KBM-7 (cell line): ENCODE measurements at regions of chr3 and their contacts with region 1.

Region 1: GRCh38 chr3:43855674-43856299 is 165.0 kb downstream of the ABHD5 start:
- DNase-seq: peak; percentile 76

Region 2: GRCh38 chr3:43394041-43394554 is 461.7 kb before region 1 on chr3:
- in situ Hi-C with region 1: no loop called
- DNase-seq: peak; percentile 56

Region 3: DNA sequence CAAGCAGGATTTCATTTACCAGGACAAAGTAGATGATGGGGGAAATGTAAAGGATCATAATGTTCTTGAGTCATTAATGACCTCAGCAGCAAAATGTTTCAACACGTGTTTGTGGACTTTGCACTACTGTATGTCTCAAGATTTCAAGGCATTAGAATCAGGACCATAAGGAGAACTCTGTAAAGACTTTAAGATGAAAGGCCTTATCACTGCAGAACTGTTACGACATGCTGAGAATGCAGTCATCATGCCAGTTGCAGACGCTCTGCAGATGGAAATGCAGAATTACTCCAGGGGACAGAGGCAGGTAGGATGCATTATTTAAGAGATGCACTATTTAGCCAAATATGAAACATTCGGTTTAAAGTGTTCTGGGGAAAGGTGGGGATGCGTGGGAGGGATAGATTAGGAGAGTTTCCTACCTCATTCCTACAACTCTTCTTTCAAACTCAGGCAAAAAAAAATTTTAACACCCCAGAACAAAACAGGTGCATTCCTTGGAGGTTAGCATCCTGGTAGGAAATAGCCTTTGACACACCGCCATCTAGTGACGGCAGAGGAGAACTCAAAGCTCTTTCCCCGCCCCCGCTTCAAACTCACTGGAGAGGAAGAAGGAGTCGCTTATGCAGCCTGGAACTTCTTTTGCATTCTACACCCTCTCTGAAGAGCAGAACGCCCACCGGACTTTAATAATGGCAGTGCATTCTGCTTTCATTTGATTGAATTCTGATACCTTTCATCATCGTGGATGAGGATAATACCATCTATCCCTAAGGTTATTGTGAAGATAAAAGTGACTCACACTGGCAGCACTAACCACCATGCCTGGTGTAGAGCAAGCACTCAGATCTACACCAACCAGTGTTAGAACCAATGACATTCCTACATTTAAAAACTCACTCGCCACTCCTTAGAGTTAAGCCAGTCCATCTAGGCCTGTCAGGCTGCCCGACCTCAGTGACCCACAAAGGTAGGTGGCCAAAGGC is 342.8 kb after region 1 on chr3:
- in situ Hi-C with region 1: loop called (anchors 25 kb)
- DNase-seq: peak; percentile 83